ENCODE measurements at regions of chr12 and their contacts with region 1.

Region 1: DNA sequence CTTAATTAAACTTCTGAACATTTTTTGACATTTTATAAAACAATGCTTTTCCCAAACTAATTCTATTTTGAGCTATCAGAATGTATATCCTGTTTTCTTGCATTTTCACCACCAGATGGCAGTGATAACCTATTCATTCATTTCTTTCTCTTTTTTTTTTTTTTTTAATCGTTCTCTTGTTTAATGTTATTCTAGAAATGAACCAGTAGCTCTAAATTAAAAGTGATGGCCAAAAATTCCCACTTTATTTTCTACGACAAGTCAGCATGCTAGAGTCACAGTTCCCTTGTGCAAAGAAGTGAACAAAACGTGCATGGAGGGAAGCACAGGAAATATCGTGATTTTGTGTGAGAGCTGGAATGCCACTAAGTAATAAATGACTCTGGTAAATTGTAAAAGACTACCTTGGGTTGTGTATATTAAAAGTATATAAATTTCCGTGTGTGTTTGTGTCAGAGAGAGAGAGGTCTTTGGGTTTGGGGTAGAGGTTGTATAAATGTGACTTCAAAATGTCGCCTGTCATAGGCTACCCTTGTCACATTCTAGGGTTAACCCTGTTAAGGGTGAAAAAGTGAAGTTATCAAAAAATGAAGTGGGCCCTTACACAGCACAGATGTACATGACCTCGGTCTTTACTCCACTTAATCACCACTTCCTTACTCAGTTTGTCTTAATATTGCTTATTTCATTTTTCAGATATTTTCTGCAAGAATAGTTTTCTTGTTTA is 40.4 kb upstream of the LDHB start:
- DNase-seq: no peak
- H3K4me3 ChIP-seq: peak overlapping the region in 3 of 4 donors; percentile 11 to 33 (median 14)
- H3K27ac ChIP-seq: no peak overlapping the region
- H3K4me1 ChIP-seq: peaks cover 3 to 6% (median 5%) of the 10 kb centered on the region in 4 donors
- H3K27me3 ChIP-seq: no peaks in the 10 kb centered on the region
- CTCF ChIP-seq: peak; percentile 67 to 73 (median 67)
- EP300 ChIP-seq: no peak
- POLR2A ChIP-seq: no peak

Region 2: DNA sequence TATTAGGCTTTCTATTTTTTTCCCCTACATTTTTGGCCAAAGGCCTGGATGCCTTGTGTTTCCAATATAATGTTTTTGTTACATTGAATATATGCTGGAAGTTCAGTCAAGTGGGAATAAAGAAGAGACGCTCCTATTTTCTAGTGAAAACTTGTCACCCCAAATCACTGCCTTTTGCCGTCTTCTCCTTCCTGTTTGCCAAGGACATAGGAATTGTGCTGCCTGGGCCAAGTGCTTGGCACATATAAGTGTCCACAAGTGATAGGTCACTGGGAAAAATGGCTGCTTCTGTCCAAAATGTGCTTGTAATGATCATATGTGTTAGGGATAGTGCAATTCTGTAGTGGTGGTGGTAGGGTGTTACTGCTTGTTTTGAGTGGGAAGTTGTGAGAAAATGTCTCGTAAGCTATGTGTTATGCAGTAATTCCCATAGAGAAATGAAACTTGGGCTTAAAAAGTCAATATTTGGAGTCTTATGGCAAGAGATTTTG is 88.0 kb after region 1 on chr12:
- intact Hi-C with region 1: no loop called
- DNase-seq: no peak
- H3K4me3 ChIP-seq: no peak overlapping the region
- H3K27ac ChIP-seq: no peak overlapping the region
- H3K4me1 ChIP-seq: peaks cover 8 to 13% (median 12%) of the 10 kb centered on the region in 4 donors
- H3K27me3 ChIP-seq: no peaks in the 10 kb centered on the region
- CTCF ChIP-seq: no peak
- EP300 ChIP-seq: no peak
- POLR2A ChIP-seq: no peak

Region 3: DNA sequence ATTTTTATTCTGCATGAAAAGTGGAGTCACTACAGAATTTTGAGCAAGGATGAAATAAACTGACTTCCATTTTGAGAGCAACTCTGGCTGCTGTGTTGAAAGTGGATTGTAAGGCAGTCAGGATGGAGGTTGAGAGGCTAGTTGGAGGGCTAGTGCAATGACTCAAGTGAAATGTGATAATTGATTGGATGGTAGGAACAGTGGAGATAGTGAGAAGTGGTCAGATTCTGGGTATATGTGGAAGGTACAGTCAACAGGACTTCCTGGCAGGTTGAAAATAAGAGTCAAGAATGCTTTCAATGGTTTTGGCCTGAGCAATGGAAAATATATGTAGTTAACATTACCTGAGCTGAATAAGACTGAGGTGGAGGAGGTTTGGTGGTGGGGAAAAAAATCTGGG is 318.9 kb after region 1 on chr12:
- intact Hi-C with region 1: loop called (anchors 2 kb)
- DNase-seq: no peak
- H3K4me3 ChIP-seq: no peak overlapping the region
- H3K27ac ChIP-seq: no peak overlapping the region
- H3K4me1 ChIP-seq: no peaks in the 10 kb centered on the region
- H3K27me3 ChIP-seq: no peaks in the 10 kb centered on the region
- CTCF ChIP-seq: no peak
- EP300 ChIP-seq: no peak
- POLR2A ChIP-seq: no peak